Activated CD4-positive, alpha-beta T cell treated with anti-CD3 and anti-CD28 coated beads for 36 hours (primary cell): ENCODE measurements at regions of chr22 and their contacts with region 1.

Region 1: DNA sequence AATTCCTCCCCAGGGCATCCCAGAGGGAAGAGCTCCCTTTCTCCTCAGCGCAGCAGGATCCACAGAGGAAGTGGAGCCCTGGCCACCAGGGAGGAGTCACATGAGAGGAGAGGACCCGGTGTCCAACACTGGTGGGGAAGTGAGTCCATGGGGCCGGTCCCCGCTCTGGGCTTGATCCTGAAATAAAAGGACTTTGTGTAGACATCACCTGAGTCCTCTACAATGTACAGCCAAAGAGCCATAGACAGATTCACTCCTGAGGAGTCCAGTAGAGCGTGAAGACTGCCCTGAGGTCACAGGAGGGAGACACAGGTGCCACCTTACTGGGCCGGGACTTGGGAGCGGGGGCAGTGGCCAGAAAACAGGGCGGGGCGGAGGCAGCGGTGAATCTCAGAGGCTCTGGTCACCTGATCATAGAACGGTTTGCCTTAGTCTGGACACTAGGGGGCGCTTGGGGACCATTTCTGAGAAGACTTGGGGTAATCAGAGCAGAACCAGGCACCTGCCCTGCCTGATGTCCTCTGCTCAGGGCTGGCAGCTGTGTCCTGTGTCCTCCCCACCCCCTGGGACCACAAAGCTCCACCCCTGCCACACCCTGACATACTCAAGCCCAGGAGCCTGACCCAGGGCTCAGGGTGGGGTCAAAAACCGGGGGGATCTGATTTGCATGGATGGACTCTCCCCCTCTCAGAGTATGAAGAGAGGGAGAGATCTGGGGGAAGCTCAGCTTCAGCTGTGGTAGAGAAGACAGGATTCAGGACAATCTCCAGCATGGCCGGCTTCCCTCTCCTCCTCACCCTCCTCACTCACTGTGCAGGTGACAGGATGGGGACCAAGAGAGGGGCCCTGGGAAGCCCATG is 112.7 kb downstream of the VPREB1 start:
- DNase-seq: peak; percentile 92
- ATAC-seq: peak; percentile 95
- H3K4me3 Mint-ChIP-seq: no peak overlapping the region
- H3K27ac Mint-ChIP-seq: no peak overlapping the region
- H3K4me1 Mint-ChIP-seq: peaks cover 5% of the 10 kb centered on the region
- H3K27me3 Mint-ChIP-seq: peaks cover 30% of the 10 kb centered on the region

Region 2: DNA sequence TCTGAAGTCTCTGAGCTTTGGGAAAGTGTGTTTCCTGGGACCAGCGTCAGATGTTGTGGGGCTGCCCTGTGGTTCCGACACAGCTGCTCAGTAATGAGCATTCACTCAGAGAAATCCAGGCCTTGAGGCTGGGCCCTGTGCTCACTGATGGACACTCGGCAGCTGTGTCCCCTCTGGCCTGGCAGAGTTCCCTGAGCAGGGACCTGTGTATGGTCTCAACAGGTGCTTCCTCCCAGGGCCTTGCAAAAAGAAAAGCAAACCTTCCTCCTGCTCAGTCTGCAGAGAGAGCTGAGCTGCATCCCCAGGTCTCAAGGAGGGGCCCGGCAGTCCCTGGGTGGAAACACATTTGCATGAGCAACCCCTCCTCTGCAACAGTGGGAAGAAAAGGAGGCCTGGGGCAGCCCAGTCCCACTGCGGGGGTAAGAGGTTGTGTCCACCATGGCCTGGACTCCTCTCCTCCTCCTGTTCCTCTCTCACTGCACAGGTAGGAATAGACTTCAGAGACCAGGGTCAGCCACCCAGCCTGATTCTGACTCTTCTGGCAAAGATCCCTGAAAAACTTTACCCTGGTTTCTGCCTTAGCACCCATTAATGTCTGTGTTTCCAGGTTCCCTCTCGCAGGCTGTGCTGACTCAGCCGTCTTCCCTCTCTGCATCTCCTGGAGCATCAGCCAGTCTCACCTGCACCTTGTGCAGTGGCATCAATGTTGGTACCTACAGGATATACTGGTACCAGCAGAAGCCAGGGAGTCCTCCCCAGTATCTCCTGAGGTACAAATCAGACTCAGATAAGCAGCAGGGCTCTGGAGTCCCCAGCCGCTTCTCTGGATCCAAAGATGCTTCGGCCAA is 18.5 kb after region 1 on chr22:
- CTCF ChIA-PET with region 1: no interaction called
- POLR2A ChIA-PET with region 1: no interaction called
- intact Hi-C with region 1: loop called (anchors 1 kb)
- DNase-seq: no peak
- ATAC-seq: no peak
- H3K4me3 Mint-ChIP-seq: no peak overlapping the region
- H3K27ac Mint-ChIP-seq: no peak overlapping the region
- H3K4me1 Mint-ChIP-seq: no peaks in the 10 kb centered on the region
- H3K27me3 Mint-ChIP-seq: peaks cover 26% of the 10 kb centered on the region

Region 3: DNA sequence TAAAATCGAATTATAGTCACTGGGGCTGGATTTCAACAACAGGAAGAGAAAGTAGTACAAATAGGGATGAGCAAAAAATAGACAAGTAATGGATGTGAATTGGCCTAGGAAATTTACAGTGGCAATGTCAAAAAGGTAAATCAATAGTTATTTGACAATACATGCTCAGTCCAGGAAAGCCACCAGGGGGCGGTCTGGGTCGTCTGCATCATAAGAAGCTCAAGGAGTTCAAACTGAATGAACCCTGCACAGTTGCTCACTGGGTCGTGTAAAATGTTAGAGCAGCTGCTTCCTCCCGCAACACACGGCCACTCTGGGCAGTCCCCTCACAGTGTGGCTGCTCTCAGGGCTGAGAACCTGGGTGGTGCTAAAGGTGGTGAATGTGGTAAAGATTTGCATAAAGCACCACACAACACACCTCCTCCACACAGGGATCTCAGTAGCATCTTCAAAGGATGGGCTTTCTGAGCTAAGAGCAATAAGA is 65.4 kb after region 1 on chr22:
- CTCF ChIA-PET with region 1: no interaction called
- POLR2A ChIA-PET with region 1: no interaction called
- intact Hi-C with region 1: loop called (anchors 1 to 10 kb)
- DNase-seq: peak; percentile 87
- ATAC-seq: peak; percentile 91
- H3K4me3 Mint-ChIP-seq: no peak overlapping the region
- H3K27ac Mint-ChIP-seq: no peak overlapping the region
- H3K4me1 Mint-ChIP-seq: no peaks in the 10 kb centered on the region
- H3K27me3 Mint-ChIP-seq: peaks cover 20% of the 10 kb centered on the region

Region 4: DNA sequence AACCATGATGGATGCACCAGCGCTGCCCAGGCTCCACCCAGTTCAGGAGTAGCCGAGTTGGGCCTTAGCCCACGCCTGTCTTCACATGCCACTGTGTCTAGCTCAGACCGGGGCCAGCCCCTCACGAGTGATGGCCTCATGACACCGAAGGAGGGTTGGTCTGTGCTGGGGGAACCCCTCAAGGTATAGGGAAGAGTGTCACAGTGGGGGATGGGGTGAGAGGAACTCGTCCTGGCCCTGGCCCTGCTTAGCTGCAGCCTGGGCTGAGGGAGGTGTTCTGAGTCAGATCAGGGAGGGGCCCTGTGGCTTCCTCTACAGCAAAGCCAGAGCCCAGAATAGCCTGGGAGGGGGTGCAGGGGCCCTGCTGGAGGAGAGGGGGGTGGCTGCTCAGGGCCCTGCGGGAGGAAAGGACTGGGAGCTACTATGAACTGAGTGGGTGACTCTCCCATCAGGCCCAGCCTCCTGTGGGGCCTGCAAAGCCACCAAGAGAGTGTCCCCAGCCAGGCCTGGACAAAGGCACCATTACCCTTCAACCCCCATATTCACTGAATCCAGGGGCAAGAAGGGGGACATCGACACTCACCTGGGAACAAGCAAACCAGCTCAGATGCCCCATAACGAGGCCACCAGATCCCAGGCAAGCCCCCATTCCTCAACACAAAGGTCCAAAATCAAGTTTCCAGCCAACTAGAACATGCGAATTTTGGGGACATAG is 571.6 kb after region 1 on chr22:
- CTCF ChIA-PET with region 1: no interaction called
- POLR2A ChIA-PET with region 1: no interaction called
- intact Hi-C with region 1: no loop called
- DNase-seq: peak; percentile 72
- ATAC-seq: peak; percentile 98
- H3K4me3 Mint-ChIP-seq: no peak overlapping the region
- H3K27ac Mint-ChIP-seq: no peak overlapping the region
- H3K4me1 Mint-ChIP-seq: peaks cover 10% of the 10 kb centered on the region
- H3K27me3 Mint-ChIP-seq: no peaks in the 10 kb centered on the region

Region 5: DNA sequence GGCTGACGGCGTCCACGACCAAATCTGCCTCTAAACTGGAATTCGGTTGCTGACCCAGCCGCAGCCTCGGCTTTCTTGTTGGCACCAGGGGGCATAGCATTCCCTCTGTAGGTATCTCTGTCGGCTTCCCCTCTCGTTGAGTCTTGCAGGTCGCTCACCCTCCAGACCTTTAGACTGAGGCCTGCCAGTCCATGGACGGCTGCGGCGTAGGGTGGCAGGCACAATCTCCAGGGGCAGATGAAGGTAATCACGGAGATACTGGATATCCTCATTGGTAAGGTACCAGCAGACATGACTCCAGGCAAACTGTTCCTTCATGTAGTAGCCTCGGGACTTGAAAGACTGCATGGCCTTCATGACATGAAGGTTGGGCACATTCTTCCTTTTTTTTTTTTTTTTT is 965.3 kb after region 1 on chr22:
- CTCF ChIA-PET with region 1: no interaction called
- POLR2A ChIA-PET with region 1: no interaction called
- intact Hi-C with region 1: no loop called
- DNase-seq: no peak
- ATAC-seq: no peak
- H3K4me3 Mint-ChIP-seq: no peak overlapping the region
- H3K27ac Mint-ChIP-seq: no peak overlapping the region
- H3K4me1 Mint-ChIP-seq: peaks cover 11% of the 10 kb centered on the region
- H3K27me3 Mint-ChIP-seq: no peaks in the 10 kb centered on the region